PC-3 (cell line): ENCODE measurements at regions of chr6 and their contacts with region 1.

Region 1: DNA sequence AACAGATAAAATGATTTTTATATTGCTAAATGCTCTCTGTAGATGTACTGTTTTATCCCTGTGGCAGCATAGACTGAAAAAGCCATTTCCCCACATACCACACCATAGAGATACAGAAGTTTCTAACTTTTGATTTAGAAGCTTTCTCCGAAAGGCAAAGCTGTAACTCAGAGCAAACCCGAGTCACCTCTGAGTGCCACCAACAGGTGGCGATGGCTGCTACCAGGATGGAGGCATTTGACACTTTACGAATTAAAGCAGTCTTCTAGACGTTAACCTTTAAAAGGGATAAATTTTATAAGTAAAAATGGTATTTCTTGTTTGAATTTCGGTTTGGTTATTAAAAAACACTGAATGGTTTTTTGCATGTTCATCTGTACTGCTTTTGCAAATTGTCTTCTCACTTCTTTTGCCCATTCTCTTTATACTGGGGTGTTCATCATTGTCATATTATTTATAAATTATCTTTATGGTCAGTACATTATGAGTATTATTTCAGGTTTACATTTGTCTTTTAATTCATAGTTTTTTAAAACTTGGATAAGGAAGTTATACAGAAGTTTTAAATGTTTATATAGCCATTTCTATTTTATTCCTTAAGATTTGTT is 201.0 kb upstream of the CEP162 start:
- DNase-seq: peak; percentile 71
- ATAC-seq: peak; percentile 64
- H3K4me3 ChIP-seq: no peak overlapping the region
- H3K27ac ChIP-seq: no peak overlapping the region
- H3K4me1 ChIP-seq: no peaks in the 10 kb centered on the region
- H3K27me3 ChIP-seq: no peaks in the 10 kb centered on the region
- CTCF ChIP-seq: peak; percentile 88

Region 2: DNA sequence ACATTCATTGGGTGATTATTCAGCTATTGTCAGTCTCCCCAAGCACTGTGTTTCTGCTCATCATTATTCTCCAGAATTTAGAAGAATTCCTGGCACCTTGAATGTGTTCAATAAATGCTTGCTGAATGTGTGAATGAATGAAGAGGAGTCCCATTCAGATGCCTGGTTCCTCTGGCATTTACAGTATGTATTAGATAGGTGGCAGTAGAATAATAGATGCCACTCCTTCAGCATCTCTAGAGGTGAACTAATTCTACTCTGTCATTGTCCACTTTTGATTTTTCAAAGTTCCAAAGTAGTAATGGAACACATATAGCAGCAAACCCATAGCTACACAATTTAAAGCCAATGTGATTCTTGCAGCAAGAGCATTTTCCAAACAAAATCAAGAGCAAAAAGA is 82.0 kb before region 1 on chr6:
- CTCF ChIA-PET with region 1: no interaction called
- POLR2A ChIA-PET with region 1: no interaction called
- intact Hi-C with region 1: loop called (anchors 5 kb)
- DNase-seq: peak; percentile 11
- ATAC-seq: peak; percentile 56
- H3K4me3 ChIP-seq: no peak overlapping the region
- H3K27ac ChIP-seq: no peak overlapping the region
- H3K4me1 ChIP-seq: no peaks in the 10 kb centered on the region
- H3K27me3 ChIP-seq: no peaks in the 10 kb centered on the region
- CTCF ChIP-seq: peak; percentile 59

Region 3: GRCh38 chr6:84515067-84515466 is 86.7 kb after region 1 on chr6:
- CTCF ChIA-PET with region 1: no interaction called
- POLR2A ChIA-PET with region 1: no interaction called
- intact Hi-C with region 1: loop called (anchors 5 kb)
- DNase-seq: no peak
- ATAC-seq: no peak
- H3K4me3 ChIP-seq: no peak overlapping the region
- H3K27ac ChIP-seq: no peak overlapping the region
- H3K4me1 ChIP-seq: no peaks in the 10 kb centered on the region
- H3K27me3 ChIP-seq: no peaks in the 10 kb centered on the region
- CTCF ChIP-seq: no peak

Region 4: GRCh38 chr6:84568971-84569370 is 140.6 kb after region 1 on chr6:
- CTCF ChIA-PET with region 1: no interaction called
- POLR2A ChIA-PET with region 1: no interaction called
- intact Hi-C with region 1: loop called (anchors 2 kb)
- DNase-seq: peak; percentile 34
- ATAC-seq: no peak; the same call in 1 of the 2 replicates
- H3K4me3 ChIP-seq: no peak overlapping the region
- H3K27ac ChIP-seq: no peak overlapping the region
- H3K4me1 ChIP-seq: no peaks in the 10 kb centered on the region
- H3K27me3 ChIP-seq: no peaks in the 10 kb centered on the region
- CTCF ChIP-seq: peak; percentile 64

Region 5: DNA sequence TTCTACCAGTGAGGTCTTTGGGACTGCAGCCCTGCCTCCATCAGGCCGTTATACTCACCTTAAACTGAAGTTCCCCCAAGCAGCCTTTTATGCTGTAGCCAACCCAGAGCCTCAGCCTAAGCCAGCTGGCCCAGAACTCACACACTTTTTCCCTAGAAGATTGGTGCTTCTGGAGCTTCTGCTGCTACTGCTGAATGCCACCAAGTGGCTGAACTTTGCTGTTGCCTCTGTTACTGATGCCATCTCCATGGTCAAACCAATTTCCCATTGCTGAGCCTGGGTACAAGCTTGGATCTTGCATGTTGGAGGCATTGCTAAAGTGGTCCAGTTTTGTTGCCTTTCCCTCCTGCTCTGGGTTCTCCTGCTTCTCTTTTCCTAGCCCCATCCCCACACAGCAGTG is 351.0 kb after region 1 on chr6:
- CTCF ChIA-PET with region 1: no interaction called
- POLR2A ChIA-PET with region 1: no interaction called
- intact Hi-C with region 1: loop called (anchors 5 kb)
- DNase-seq: peak; percentile 6
- ATAC-seq: no peak
- H3K4me3 ChIP-seq: no peak overlapping the region
- H3K27ac ChIP-seq: no peak overlapping the region
- H3K4me1 ChIP-seq: no peaks in the 10 kb centered on the region
- H3K27me3 ChIP-seq: peaks cover 49% of the 10 kb centered on the region
- CTCF ChIP-seq: peak; percentile 30; the same call in 1 of the 2 replicates